ENCODE measurements at regions of chr2 and their contacts with region 1.

Region 1: DNA sequence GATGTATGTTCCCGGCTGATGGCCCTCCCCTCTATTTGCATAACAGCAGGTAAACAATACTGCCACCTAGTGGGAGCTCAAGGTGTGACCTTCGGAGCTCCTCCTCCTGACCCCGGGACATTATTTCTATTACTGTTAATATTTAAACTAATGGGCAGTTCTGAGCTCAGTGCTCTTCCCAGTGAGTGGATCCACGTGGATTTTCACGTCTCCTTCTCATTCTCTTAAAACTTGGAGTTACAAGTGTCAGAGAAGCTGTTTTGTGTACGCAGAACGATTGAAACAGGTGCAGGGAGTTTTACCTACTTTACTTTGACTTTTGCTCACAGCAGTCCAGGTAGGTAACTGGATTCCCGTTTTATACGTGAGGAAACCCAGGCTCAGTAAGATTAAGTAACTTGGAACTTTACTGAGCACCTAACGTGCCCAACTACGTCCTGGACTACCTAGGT is 127.3 kb downstream of the PRKCE start:
- DNase-seq: peak in 1 of 2 donors; percentile 74
- H3K4me3 ChIP-seq: no peak overlapping the region
- H3K27ac ChIP-seq: no peak overlapping the region
- H3K4me1 ChIP-seq: no peaks in the 10 kb centered on the region
- H3K27me3 ChIP-seq: no peaks in the 10 kb centered on the region
- CTCF ChIP-seq: peak; percentile 53 to 85 (median 76)

Region 2: DNA sequence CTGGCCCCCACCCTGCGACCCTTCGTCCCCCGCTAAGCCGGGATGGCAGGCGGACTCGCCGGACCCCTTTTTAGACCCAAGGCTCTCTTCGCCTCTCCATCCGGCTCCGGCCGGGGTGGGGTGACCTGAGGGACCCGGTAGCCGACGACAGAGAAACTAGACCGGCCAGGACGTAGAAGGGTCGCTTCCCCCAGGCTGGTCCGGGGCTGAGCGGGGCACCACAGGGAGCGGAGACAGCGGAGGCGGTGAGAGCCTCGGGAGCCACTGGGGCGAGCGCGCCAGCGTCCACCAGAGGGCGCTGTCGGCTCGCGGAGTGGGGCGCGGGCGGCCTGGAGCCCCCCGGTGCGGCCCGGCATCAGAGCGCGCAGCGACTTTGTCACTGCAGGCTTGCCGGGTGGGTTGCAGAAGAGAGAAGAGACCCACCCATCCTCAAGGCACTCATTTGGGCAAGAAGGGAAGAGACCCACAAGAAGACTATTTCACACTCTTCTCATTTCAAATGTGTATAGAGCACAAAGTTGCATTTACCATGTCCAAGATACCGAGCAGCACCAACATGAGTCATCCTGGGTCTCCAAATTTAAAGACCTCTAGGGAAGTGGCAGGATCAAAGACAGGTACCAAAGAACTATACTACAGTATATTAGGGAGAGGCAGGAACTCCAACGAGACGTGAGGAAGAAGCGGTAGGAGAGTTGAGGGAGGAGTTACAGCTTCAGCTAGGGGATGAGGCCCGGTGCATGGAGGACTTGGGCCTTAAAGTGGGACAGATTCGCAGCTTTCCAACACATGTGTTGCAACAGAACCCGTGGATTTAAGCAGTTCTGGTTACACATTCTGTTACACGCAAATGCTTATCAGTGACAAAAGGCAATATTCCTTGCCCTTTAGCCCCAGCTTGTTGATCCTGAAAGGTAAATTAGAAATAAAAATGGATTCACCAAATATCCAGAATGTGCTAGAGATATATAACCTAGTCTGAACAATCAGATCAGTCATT is 134.9 kb before region 1 on chr2:
- intact Hi-C with region 1: loop called (anchors 1 kb)
- DNase-seq: peak in 1 of 2 donors; percentile 76
- H3K4me3 ChIP-seq: peak overlapping the region; percentile 57 to 63
- H3K27ac ChIP-seq: no peak overlapping the region
- H3K4me1 ChIP-seq: peaks cover 0 to 3% of the 10 kb centered on the region in 2 donors
- H3K27me3 ChIP-seq: no peaks in the 10 kb centered on the region
- CTCF ChIP-seq: peak; percentile 94 to 100 (median 98)